Activated CD4-positive, alpha-beta memory T cell treated with anti-CD3 and anti-CD28 coated beads for 36 hours (primary cell): ENCODE measurements at regions of chr17 and their contacts with region 1.

Region 1: GRCh38 chr17:76631829-76632565 is 11.6 kb downstream of the ST6GALNAC1 start:
- DNase-seq: no peak
- H3K4me3 Mint-ChIP-seq: no peak overlapping the region
- H3K27ac Mint-ChIP-seq: no peak overlapping the region
- H3K4me1 Mint-ChIP-seq: no peaks in the 10 kb centered on the region
- H3K27me3 Mint-ChIP-seq: no peaks in the 10 kb centered on the region

Region 2: DNA sequence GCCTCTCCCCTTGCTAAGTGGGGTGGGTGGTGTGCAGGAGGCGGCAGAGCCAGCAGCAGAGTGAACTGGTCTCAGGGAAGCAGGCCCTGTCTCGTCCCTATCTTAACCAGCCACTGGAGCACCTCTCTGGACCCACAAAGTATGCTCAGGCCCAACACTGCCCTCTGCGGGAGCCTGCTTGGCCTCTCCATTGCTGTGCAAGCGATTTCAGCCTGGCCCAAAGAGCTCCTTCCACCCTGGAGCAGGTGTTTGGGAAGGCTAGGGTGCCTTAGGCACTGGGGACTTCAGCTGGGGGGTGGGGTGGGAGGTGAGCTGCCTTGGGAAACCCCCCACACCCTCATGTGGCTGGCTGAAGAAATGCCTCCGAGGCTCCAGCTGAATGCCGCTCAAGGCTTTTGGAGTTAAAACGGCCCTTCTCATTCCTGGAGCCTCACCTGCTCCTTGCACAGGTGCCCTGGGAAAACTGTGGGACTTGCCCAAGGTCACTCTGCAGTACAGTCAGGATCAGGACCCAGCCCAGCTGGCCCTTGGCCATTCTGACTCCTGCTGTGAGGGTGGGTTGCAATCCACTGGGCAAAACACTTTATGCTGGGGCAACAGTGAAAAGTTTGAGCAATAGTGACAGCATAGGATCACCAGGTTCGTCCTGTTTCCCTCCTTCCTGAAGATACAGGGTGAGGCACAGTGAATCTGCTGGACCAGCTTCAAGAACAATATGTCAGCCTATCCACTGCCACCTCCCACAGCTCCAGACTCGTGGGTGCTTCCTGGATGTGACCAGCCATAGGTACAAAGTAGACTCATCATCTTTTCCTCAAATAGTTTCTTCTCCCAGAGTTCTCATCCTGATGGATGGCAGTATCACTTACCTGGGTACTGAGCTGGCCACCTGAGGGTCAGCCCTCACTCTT is 173.2 kb before region 1 on chr17:
- CTCF ChIA-PET with region 1: no interaction called
- POLR2A ChIA-PET with region 1: no interaction called
- intact Hi-C with region 1: no loop called
- DNase-seq: peak; percentile 40
- H3K4me3 Mint-ChIP-seq: no peak overlapping the region
- H3K27ac Mint-ChIP-seq: no peak overlapping the region
- H3K4me1 Mint-ChIP-seq: no peaks in the 10 kb centered on the region
- H3K27me3 Mint-ChIP-seq: no peaks in the 10 kb centered on the region

Region 3: GRCh38 chr17:76562734-76563148 is 69.3 kb before region 1 on chr17:
- CTCF ChIA-PET with region 1: no interaction called
- POLR2A ChIA-PET with region 1: no interaction called
- intact Hi-C with region 1: no loop called
- DNase-seq: peak; percentile 66
- H3K4me3 Mint-ChIP-seq: peak overlapping the region; percentile 55
- H3K27ac Mint-ChIP-seq: peak overlapping the region; percentile 65
- H3K4me1 Mint-ChIP-seq: peaks cover 63% of the 10 kb centered on the region
- H3K27me3 Mint-ChIP-seq: no peaks in the 10 kb centered on the region

Region 4: DNA sequence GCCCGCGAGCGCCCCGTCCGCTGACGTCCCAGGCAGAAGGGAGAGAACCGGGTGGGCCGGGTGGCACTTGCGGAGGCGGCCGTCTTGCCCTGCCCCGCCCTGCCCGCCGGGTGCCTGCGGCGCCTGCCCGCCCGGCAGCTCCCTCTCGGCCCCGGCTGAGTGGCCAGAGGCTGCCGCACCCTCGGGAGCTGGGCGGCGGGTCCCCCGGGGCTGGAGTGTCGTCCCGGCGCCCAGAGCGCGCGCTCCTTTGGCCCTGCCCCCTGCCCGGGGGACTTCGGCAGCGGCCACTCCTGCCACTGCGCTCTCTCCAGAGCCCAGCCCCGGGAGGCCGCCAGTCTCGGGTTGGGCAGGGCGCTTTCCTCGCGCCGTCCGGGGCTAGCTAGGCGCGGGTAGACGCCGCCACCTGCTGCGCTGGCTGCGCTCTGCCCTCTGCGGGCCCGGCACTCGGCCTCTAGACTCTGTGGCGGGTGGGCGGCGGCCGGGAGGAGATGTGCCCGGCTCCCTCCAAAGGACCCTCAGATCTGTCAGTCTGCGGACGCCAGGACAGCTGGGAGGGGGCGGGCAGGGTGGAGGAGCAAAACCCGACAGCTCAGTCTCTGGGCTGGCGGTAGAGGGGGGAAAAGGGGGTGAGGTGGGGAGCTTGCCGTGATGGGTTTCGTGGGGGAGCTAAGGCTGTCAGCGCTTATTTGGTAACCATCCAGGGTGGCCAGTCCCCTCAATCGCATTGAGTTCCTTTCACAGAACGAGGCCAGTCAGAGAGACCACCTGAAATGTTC is 46.0 kb before region 1 on chr17 and contains the start of gene ST6GALNAC2:
- CTCF ChIA-PET with region 1: no interaction called
- POLR2A ChIA-PET with region 1: no interaction called
- intact Hi-C with region 1: loop called (anchors 5 kb)
- DNase-seq: peak; percentile 53
- H3K4me3 Mint-ChIP-seq: peak within 1 kb of the TSS; percentile 57
- H3K27ac Mint-ChIP-seq: no peak within 1 kb of the TSS
- H3K4me1 Mint-ChIP-seq: peaks cover 13% of the 10 kb centered on the region
- H3K27me3 Mint-ChIP-seq: peaks cover 46% of the 10 kb centered on the region
- total RNA-seq, gene ST6GALNAC2: 0.19 to 0.51 TPM